B cell (primary cell): ENCODE measurements at regions of chr17 and their contacts with region 1.

Region 1: DNA sequence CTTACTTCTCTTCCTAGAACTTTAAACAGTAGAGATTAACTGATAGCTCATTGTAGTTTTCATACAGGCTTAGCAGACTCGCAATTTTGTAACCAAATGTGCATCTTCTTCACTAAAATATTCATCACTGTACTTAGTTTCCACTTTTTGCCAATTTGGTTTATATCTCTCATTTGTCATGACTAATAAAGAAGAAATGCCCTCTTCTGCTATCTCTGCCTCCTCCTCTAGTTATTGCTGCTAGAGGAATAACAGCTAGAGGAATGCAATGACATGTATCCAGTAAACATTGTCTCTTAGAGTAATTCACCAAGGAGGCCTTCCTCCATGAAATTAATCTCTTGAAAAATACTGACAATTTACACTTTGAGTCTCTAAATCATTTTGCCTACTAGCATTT is 115.5 kb upstream of the COX10 start:
- DNase-seq: no peak
- ATAC-seq: no peak
- H3K4me3 ChIP-seq: no peak overlapping the region
- H3K4me3 Mint-ChIP-seq: no peak overlapping the region
- H3K27ac ChIP-seq: no peak overlapping the region
- H3K27ac Mint-ChIP-seq: no peak overlapping the region
- H3K4me1 ChIP-seq: no peaks in the 10 kb centered on the region
- H3K4me1 Mint-ChIP-seq: no peaks in the 10 kb centered on the region
- H3K27me3 ChIP-seq: no peaks in the 10 kb centered on the region
- H3K27me3 Mint-ChIP-seq: no peaks in the 10 kb centered on the region
- CTCF ChIP-seq: no peak

Region 2: GRCh38 chr17:13940858-13941665 is 12.8 kb before region 1 on chr17:
- CTCF ChIA-PET with region 1: interaction called, 14 read pairs
- POLR2A ChIA-PET with region 1: no interaction called
- intact Hi-C with region 1: no loop called
- DNase-seq: no peak
- ATAC-seq: no peak
- H3K4me3 ChIP-seq: no peak overlapping the region
- H3K4me3 Mint-ChIP-seq: no peak overlapping the region
- H3K27ac ChIP-seq: no peak overlapping the region
- H3K27ac Mint-ChIP-seq: no peak overlapping the region
- H3K4me1 ChIP-seq: peaks cover 3 to 10% of the 10 kb centered on the region in 2 donors
- H3K4me1 Mint-ChIP-seq: peaks cover 18% of the 10 kb centered on the region
- H3K27me3 ChIP-seq: no peaks in the 10 kb centered on the region
- H3K27me3 Mint-ChIP-seq: no peaks in the 10 kb centered on the region
- CTCF ChIP-seq: no peak

Region 3: DNA sequence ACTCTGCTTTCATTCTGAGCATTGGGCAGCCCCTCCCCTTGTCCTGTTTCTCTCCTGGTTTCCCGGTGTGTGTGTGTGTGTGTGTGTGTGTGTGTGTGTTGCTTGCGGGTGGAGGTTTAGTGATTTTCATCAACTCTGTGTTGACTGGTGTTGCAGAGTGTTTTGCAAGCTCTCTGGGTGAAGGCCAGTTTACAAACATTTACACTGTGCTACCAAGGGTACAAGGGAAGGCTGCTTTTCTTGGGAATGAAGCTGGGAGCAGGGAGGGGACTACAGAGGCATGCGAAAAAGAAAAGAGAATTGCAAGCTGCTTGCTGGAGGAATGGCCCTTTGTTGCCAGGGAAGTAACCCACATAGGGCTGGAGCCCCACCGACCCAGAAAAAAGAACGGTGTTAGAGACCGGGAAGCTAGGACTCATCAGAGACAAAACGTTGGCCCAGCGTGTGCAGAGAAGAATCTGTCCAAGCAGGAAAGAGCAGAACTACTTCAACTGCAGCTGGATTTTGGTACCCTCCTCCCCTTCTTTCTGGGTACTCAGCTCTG is 376.7 kb after region 1 on chr17:
- CTCF ChIA-PET with region 1: no interaction called
- POLR2A ChIA-PET with region 1: no interaction called
- intact Hi-C with region 1: no loop called
- DNase-seq: no peak
- ATAC-seq: no peak
- H3K4me3 ChIP-seq: no peak overlapping the region
- H3K4me3 Mint-ChIP-seq: no peak overlapping the region
- H3K27ac ChIP-seq: no peak overlapping the region
- H3K27ac Mint-ChIP-seq: no peak overlapping the region
- H3K4me1 ChIP-seq: no peaks in the 10 kb centered on the region
- H3K4me1 Mint-ChIP-seq: peaks cover 6% of the 10 kb centered on the region
- H3K27me3 ChIP-seq: peaks cover 0 to 3% (median 0%) of the 10 kb centered on the region in 4 experiments
- H3K27me3 Mint-ChIP-seq: no peaks in the 10 kb centered on the region
- CTCF ChIP-seq: no peak